Activated CD4-positive, alpha-beta T cell treated with anti-CD3 and anti-CD28 coated beads, Interleukin-2, amount 10 ng/mL, durations not matched to agents 24 days and 14 days (primary cell): ENCODE measurements at regions of chr3 and their contacts with region 1.

Region 1: DNA sequence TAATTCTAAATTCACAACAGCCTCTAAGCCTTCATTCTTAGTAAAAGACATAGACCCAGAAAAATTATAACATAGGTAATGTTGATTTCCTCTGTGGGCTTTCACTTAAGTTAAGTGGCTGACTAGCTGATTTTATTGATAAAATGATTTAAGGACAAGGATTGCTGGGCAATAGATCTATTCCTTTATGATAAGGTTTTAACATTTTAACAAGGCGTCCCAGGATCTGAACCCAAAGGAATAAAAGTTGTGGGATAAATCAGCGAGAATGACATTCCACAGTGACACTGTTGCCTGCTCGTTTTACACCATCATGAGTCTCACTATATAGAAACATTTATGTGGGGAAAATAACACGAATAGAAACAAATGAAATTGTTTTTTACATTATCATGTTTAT is 1151.0 kb downstream of the ZPLD1 start:
- DNase-seq: no peak
- H3K4me3 Mint-ChIP-seq: no peak overlapping the region
- H3K27ac Mint-ChIP-seq: no peak overlapping the region
- H3K4me1 Mint-ChIP-seq: no peaks in the 10 kb centered on the region
- H3K27me3 Mint-ChIP-seq: no peaks in the 10 kb centered on the region

Region 2: GRCh38 chr3:103653996-103654395 is 68.2 kb after region 1 on chr3:
- intact Hi-C with region 1: loop called (anchors 2 kb)
- DNase-seq: no peak
- H3K4me3 Mint-ChIP-seq: no peak overlapping the region
- H3K27ac Mint-ChIP-seq: no peak overlapping the region
- H3K4me1 Mint-ChIP-seq: no peaks in the 10 kb centered on the region
- H3K27me3 Mint-ChIP-seq: no peaks in the 10 kb centered on the region